Naive thymus-derived CD4-positive, alpha-beta T cell (primary cell): ENCODE measurements at regions of chr6 and their contacts with region 1.

Region 1: DNA sequence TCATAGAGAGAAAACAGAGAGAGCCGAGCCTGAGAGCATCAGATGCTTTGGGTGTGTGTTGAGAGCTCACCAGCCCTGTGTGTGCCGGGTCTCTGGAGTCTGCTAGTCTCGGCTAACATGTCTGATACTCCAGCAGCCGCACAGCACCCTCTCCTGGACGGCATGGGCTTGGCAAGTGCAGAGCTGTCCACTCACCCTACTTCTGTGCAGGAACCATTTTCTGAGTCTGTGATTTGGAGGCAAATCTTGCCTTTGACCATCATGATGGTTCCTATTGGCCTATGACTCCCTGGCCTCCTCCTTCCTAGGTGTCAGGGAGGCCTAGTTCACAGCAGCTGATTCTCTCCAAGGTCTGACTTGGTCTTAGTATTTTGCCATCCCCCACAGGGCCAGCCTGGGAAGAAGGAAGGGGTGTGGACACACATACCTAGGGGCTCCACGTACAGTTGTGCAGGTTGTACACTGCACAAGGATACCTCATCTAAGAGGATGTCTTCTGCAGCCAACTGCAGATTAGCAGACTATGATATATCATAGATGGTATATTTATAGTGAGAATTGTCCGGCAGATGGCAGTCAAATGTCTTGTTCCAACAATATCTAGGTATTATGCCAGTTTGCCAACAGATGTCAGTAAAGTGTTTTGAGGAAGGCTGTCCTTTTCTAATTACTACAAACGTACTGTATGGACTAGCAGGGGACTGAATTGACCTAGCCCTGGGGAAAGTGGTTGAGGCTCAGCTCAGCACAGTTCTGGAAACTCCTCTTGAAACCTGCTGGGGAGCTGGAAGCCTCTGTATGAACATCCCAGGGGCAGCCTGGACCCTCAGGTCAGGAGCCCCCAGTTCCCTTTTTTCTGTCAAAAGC is 13.0 kb downstream of the FGD2 start:
- DNase-seq: peak; percentile 74 to 88 (median 83)
- ATAC-seq: peak; percentile 96
- H3K4me3 ChIP-seq: no peak overlapping the region
- H3K4me3 Mint-ChIP-seq: peak overlapping the region in 3 of 10 donors; percentile 17 to 40 (median 35)
- H3K27ac ChIP-seq: peak overlapping the region; percentile 15
- H3K27ac Mint-ChIP-seq: peak overlapping the region; percentile 65 to 87 (median 80)
- H3K4me1 ChIP-seq: peaks cover 23 to 32% of the 10 kb centered on the region in 2 donors
- H3K4me1 Mint-ChIP-seq: peaks cover 35 to 55% (median 46%) of the 10 kb centered on the region in 7 donors
- H3K27me3 ChIP-seq: no peaks in the 10 kb centered on the region
- H3K27me3 Mint-ChIP-seq: no peaks in the 10 kb centered on the region

Region 2: DNA sequence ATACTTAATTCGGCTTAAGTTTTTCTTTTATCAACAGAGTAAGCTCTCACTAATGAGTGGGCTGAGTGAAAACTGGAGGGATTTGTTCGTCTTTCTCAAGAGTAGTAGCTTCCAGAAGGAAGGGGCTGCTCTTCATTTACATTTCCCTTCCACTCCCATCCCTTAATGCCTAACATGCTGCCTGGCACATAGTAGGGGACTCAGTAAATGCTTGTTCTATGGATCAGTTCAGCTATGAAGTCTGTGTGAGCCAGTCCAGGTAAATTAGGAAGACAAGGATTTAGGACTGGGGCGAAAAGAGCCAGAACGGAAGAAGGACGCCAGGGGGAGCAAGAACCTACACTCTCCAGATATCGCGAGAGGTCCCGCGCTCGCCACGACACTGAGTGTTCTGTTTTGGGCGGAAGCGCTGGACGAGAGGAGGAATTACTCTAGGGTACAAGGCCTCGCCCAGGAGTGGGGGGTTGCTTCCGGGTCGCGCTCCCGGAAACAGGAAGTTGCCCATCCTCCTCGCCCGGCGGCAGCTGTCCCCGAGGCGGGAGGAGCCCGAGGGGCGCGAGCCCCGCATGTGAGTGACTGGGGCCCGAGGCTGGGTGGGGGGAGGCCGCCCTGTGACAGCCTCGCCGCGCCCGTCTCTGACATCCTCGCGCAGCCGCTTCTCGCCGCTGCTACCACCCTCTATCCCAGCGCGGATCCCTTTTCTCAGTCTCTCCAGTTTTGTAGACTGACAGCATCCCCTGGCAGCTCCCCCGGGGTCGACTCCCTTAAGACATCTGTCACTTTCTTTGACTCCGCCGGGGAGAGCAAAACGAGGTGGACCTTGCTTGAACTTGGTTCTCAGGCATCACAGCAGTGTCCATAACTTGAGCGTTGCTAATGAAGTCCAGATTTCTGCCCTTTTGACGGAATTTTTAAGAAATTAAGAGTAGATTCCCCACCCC is 132.7 kb before region 1 on chr6 and contains the start of gene C6orf89:
- CTCF ChIA-PET with region 1: interaction called, 51 read pairs
- POLR2A ChIA-PET with region 1: interaction called, 12 read pairs
- intact Hi-C with region 1: loop called (anchors 1 kb)
- DNase-seq: peak; percentile 86 to 98 (median 95)
- ATAC-seq: peak; percentile 100
- H3K4me3 ChIP-seq: peak within 1 kb of the TSS; percentile 96
- H3K4me3 Mint-ChIP-seq: peak within 1 kb of the TSS; percentile 83 to 92 (median 90)
- H3K27ac ChIP-seq: peak within 1 kb of the TSS; percentile 81
- H3K27ac Mint-ChIP-seq: peak within 1 kb of the TSS; percentile 90 to 97 (median 95)
- H3K4me1 ChIP-seq: peaks cover 16 to 24% of the 10 kb centered on the region in 2 donors
- H3K4me1 Mint-ChIP-seq: peaks cover 25 to 47% (median 39%) of the 10 kb centered on the region in 7 donors
- H3K27me3 ChIP-seq: no peaks in the 10 kb centered on the region
- H3K27me3 Mint-ChIP-seq: no peaks in the 10 kb centered on the region
- total RNA-seq, gene C6orf89: 34.6 to 48.2 (median 47.7) TPM

Region 3: DNA sequence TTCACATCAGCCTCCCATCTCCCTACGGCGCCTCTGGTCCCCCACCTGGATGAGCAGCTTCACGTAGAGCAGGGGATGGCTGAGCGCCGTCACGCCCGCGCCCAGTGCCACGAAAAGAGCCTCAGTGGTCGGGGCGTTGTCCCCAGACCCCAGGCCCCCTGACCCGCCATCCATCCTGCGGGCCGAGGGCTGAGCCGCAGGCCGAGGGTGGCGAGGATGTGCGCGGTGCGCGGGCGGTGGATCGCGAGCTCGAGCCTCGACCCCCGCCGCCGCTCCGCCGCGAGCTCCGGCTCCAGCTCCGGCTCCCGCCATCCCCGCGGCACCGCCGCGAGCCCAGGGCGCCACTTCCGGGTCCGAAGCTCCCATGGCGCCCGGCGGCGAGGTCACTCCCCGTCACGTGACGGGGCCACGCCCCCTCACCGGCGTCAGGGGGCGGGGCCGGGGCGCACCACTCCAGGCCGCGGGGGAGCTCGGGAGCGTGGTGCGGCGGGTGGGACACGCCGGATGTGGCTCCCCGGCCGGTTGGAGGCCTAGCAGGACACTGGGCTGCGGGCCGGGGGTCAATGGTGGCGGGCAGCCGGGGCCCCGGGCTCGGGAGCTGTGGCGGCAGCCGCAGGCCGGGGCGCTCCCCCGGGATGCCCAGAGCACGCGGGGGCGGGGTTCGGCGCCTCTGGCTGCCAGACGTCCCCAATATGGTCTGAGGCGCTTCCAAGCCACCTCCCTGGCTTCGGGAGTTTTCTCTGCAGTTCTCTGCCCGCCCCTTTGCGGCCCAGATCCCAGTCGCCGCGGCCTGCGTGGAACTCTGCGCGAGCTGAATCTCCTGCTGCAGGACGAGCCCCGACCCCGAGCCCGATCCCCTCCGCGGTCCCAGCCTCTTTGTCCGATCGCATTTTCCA is 32.4 kb before region 1 on chr6 and contains the start of gene MTCH1:
- CTCF ChIA-PET with region 1: interaction called, 5 read pairs
- POLR2A ChIA-PET with region 1: interaction called, 7 read pairs
- intact Hi-C with region 1: loop called (anchors 1 kb)
- DNase-seq: peak; percentile 85 to 98 (median 92)
- ATAC-seq: peak; percentile 93
- H3K4me3 ChIP-seq: peak within 1 kb of the TSS; percentile 98
- H3K4me3 Mint-ChIP-seq: peak within 1 kb of the TSS in 6 of 10 donors; percentile 98 to 100 (median 100)
- H3K27ac ChIP-seq: peak within 1 kb of the TSS; percentile 96
- H3K27ac Mint-ChIP-seq: peak within 1 kb of the TSS in 7 of 9 donors; percentile 98 to 99 (median 99)
- H3K4me1 ChIP-seq: peaks cover 22 to 27% of the 10 kb centered on the region in 2 donors
- H3K4me1 Mint-ChIP-seq: peaks cover 12 to 26% (median 18%) of the 10 kb centered on the region in 7 donors
- H3K27me3 ChIP-seq: no peaks in the 10 kb centered on the region
- H3K27me3 Mint-ChIP-seq: peaks cover 0 to 17% (median 0%) of the 10 kb centered on the region in 5 donors
- total RNA-seq, gene MTCH1: 123 to 198 (median 130) TPM

Region 4: DNA sequence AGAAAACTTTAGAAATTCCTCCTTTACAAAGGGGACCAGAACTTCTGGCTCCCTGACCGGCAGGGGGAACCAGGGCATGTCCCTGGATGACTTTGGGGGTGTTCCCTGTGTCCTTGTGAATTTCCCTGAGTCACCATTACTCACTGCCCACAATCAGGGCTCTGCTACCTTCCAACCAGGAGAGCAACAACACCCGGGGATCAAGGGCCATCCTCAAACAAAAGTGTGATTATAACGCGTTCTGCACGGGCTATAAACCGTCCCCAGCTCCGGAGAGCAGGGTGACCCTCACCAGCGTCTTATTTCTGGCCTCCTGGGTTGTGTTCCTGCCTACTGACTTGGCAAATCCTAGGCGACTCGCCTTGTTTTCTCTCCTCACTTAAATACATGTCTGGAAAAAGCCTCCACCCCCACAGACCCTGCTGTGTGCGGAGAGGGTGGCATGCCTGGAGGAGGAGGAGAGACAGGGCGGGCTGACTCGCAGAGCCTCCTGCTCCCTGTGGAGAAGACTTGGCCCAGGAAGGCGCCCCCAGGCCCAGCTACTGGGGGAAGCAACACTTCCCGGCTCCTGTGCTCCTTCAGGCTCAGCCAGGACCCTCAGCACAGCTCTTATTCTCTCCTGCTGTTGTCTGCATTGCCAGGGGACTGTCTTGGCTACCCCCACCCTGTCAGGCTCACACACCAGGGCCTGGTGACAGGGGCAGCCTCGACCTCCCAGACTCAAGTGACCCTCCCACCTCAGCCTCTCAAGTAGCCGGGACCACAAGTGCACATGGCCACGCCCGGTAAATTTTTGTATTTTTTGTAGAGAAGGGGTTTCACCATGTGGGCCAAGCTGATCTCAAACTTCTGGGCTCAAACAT is 41.1 kb after region 1 on chr6:
- CTCF ChIA-PET with region 1: interaction called, 13 read pairs
- POLR2A ChIA-PET with region 1: no interaction called
- intact Hi-C with region 1: no loop called
- DNase-seq: no peak
- ATAC-seq: peak; percentile 76
- H3K4me3 ChIP-seq: no peak overlapping the region
- H3K4me3 Mint-ChIP-seq: no peak overlapping the region
- H3K27ac ChIP-seq: no peak overlapping the region
- H3K27ac Mint-ChIP-seq: no peak overlapping the region
- H3K4me1 ChIP-seq: no peaks in the 10 kb centered on the region
- H3K4me1 Mint-ChIP-seq: peaks cover 0 to 20% (median 0%) of the 10 kb centered on the region in 7 donors
- H3K27me3 ChIP-seq: no peaks in the 10 kb centered on the region
- H3K27me3 Mint-ChIP-seq: no peaks in the 10 kb centered on the region

Region 5: GRCh38 chr6:37207903-37208456 is 189.5 kb after region 1 on chr6:
- CTCF ChIA-PET with region 1: interaction called, 639 read pairs
- POLR2A ChIA-PET with region 1: interaction called, 44 read pairs
- intact Hi-C with region 1: loop called (anchors 1 kb)
- DNase-seq: peak; percentile 67 to 85 (median 82)
- ATAC-seq: peak; percentile 87
- H3K4me3 ChIP-seq: no peak overlapping the region
- H3K4me3 Mint-ChIP-seq: peak overlapping the region; percentile 4 to 77 (median 68)
- H3K27ac ChIP-seq: peak overlapping the region; percentile 23
- H3K27ac Mint-ChIP-seq: peak overlapping the region; percentile 72 to 98 (median 91)
- H3K4me1 ChIP-seq: peaks cover 36 to 39% of the 10 kb centered on the region in 2 donors
- H3K4me1 Mint-ChIP-seq: peaks cover 36 to 69% (median 64%) of the 10 kb centered on the region in 7 donors
- H3K27me3 ChIP-seq: no peaks in the 10 kb centered on the region
- H3K27me3 Mint-ChIP-seq: no peaks in the 10 kb centered on the region